IMR-90 (cell line): ENCODE measurements at regions of chr5 and their contacts with region 1.

Region 1: DNA sequence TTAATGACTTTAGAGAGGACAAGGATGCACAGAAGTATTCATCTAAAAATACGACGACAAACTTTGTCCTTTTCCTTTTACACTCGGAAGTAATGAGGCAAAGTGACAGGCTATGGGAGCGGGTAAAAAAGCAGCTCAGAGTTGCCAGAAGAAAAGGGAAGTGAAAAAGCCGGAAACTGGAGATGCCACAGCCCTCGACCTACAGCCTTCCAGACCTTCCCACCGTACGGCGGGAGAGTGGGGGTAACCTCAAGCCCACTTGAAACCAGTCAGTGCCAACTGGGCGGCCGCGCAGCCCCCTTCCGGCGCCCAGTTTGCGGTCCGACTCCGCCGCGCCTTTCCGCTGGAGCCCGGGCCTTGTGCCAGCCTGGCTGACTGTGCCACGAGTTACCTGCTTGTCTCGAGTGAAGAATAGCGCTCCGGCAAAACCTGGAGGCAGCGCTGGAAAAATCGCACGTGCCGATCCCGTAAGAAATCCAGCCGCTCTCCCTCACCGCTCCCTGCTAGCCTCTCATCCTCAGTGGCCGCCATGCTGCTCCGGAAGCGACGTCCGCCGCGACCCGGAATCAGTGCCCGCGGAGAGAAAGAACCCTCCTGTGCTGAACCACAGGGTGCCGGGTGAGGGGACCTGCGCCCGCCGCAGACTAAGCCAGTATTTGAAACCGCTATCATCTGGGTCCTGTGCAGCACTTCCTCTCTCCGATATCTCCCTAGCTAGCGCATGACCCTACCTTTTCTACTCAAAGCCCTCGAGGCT is at the start of gene PGGT1B:
- DNase-seq: peak; percentile 55
- ATAC-seq: peak; percentile 93
- H3K4me3 ChIP-seq: peak within 1 kb of the TSS; percentile 79
- H3K27ac ChIP-seq: peak within 1 kb of the TSS; percentile 91
- H3K4me1 ChIP-seq: peaks cover 7% of the 10 kb centered on the region; the same call in 1 of the 2 replicates
- H3K27me3 ChIP-seq: no peaks in the 10 kb centered on the region
- CTCF ChIP-seq: no peak
- POLR2A ChIP-seq: peak; percentile 78
- RAD21 ChIP-seq: no peak
- total RNA-seq, gene PGGT1B: 17.2 and 19.2 TPM in 2 replicates

Region 2: GRCh38 chr5:115169487-115170133 is 92.9 kb before region 1 on chr5 and contains the start of gene TRIM36:
- CTCF ChIA-PET with region 1: no interaction called
- POLR2A ChIA-PET with region 1: no interaction called
- dilution Hi-C with region 1: no loop called
- in situ Hi-C with region 1: no loop called
- intact Hi-C with region 1: loop called (anchors 1 kb)
- DNase-seq: peak; percentile 79
- ATAC-seq: peak; percentile 95
- H3K4me3 ChIP-seq: peak within 1 kb of the TSS; percentile 73
- H3K27ac ChIP-seq: no peak within 1 kb of the TSS
- H3K4me1 ChIP-seq: peaks cover 4% of the 10 kb centered on the region; the same call in 1 of the 2 replicates
- H3K27me3 ChIP-seq: peaks cover 49% of the 10 kb centered on the region
- CTCF ChIP-seq: peak; percentile 26; the same call in 1 of the 2 replicates
- POLR2A ChIP-seq: no peak
- RAD21 ChIP-seq: no peak
- total RNA-seq, gene TRIM36: under 0.01 and 0.18 TPM in 2 replicates

Region 3: GRCh38 chr5:115296124-115297022 is 33.9 kb after region 1 on chr5 and contains the start of gene CCDC112:
- CTCF ChIA-PET with region 1: no interaction called
- POLR2A ChIA-PET with region 1: no interaction called
- dilution Hi-C with region 1: no loop called
- in situ Hi-C with region 1: no loop called
- intact Hi-C with region 1: loop called (anchors 5 kb)
- DNase-seq: peak; percentile 66
- ATAC-seq: peak; percentile 96
- H3K4me3 ChIP-seq: peak within 1 kb of the TSS; percentile 68
- H3K27ac ChIP-seq: peak within 1 kb of the TSS; percentile 23; the same call in 1 of the 2 replicates
- H3K4me1 ChIP-seq: no peaks in the 10 kb centered on the region
- H3K27me3 ChIP-seq: no peaks in the 10 kb centered on the region; the same call in 1 of the 2 replicates
- CTCF ChIP-seq: no peak
- POLR2A ChIP-seq: 0 out of 2 replicates have a peak, but pooled peaks have one; percentile 29
- RAD21 ChIP-seq: no peak
- total RNA-seq, gene CCDC112: 2.0 and 5.0 TPM in 2 replicates